Activated CD4-positive, alpha-beta memory T cell treated with anti-CD3 and anti-CD28 coated beads for 36 hours (primary cell): ENCODE measurements at regions of chr1 and their contacts with region 1.

Region 1: GRCh38 chr1:112706908-112707663 is at the start of gene RHOC:
- DNase-seq: peak; percentile 83
- H3K4me3 Mint-ChIP-seq: peak within 1 kb of the TSS; percentile 65
- H3K27ac Mint-ChIP-seq: no peak within 1 kb of the TSS
- H3K4me1 Mint-ChIP-seq: peaks cover 38% of the 10 kb centered on the region
- H3K27me3 Mint-ChIP-seq: peaks cover 3% of the 10 kb centered on the region
- total RNA-seq, gene RHOC: 50.1 to 51.6 TPM

Region 2: DNA sequence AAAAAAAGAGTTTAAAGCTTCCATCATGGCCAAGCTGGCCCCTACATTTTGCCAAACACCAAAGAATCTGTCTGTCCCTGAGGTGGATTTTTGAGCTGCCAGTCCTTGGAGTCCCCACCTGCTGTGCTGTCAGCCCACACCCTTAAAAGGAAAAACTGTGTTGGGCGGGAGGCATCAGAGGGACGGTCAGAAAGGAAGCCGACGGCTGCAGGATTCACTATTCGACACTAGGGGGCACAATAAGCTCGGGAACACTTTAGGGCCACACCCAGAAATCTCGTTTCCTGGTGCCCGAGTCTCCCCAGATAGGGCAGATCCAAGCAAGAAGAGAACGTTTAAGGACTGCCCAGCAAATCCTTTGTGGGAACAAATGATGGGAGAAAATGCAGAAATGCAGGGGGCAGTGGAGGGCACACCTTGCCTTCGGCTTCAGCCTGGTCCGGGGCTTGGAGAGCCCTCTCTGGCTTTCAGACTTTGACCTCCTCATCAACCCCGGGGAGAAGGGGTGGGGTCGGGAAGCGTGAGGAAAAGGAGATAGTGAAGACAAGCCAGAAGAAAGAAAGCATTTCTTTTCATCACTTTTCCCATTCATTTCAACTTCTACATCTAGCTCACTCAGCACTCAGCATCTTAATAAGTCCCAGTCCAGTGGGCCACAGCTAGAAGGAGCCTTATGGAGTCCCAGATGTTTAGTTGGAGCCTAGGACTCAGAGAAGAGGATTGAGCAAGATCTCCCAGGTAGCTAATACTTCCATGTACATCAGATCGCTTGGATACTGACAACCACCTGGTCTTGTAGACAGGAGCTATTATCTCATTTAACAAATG is 316.1 kb before region 1 on chr1:
- CTCF ChIA-PET with region 1: interaction called, 68 read pairs
- POLR2A ChIA-PET with region 1: interaction called, 4 read pairs
- intact Hi-C with region 1: loop called (anchors 1 kb)
- DNase-seq: peak; percentile 89
- H3K4me3 Mint-ChIP-seq: peak overlapping the region; percentile 55
- H3K27ac Mint-ChIP-seq: no peak overlapping the region
- H3K4me1 Mint-ChIP-seq: peaks cover 34% of the 10 kb centered on the region
- H3K27me3 Mint-ChIP-seq: peaks cover 19% of the 10 kb centered on the region

Region 3: GRCh38 chr1:112466078-112466660 is 240.9 kb before region 1 on chr1:
- CTCF ChIA-PET with region 1: interaction called, 5 read pairs
- POLR2A ChIA-PET with region 1: no interaction called
- intact Hi-C with region 1: loop called (anchors 2 kb)
- DNase-seq: peak; percentile 91
- H3K4me3 Mint-ChIP-seq: peak overlapping the region; percentile 74
- H3K27ac Mint-ChIP-seq: no peak overlapping the region
- H3K4me1 Mint-ChIP-seq: peaks cover 8% of the 10 kb centered on the region
- H3K27me3 Mint-ChIP-seq: peaks cover 15% of the 10 kb centered on the region

Region 4: DNA sequence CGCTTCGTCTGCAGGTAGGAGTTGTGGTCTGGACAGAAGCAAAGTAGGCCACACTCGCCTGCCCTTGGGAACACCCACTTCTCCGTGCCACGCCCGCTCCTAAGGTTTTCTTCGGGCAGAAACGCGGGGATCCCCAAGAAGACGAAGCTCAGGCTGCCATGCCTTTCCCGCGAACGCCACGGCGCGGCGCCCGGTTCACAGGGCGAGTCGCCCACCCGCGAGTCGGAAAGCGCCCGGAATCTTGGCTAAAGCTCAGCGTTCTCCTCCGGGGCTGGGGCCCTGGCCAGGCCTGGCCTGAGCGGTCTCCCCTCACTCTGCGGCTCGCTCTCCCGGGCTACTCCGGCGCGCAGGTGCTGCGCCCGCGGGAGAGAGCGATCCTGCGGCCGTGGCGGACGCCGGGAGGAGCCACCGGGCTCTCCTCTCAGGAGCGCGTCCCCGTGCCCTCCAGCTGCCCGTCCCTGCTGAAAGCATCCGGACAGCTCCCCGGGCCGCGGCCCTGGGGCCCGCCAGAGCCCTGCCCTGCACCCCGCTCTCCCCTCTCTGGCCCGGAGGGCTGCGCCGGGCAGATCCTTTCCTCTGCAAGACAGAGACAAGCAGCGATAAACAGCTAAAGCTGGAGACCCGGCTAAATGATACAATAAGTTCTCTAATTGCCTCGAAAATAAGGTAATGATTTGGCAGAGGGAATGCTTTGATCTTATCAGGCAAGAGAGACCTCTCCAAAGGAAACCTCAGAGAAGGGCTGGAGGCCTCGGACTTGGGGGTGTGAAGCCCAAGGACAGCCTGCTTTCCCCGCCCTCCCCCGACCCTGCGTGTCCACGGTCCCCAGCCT is 205.1 kb before region 1 on chr1:
- CTCF ChIA-PET with region 1: interaction called, 43 read pairs
- POLR2A ChIA-PET with region 1: no interaction called
- intact Hi-C with region 1: loop called (anchors 1 kb)
- DNase-seq: peak; percentile 70
- H3K4me3 Mint-ChIP-seq: peak overlapping the region; percentile 10
- H3K27ac Mint-ChIP-seq: no peak overlapping the region
- H3K4me1 Mint-ChIP-seq: peaks cover 6% of the 10 kb centered on the region
- H3K27me3 Mint-ChIP-seq: peaks cover 51% of the 10 kb centered on the region

Region 5: GRCh38 chr1:112666946-112667345 is 40.1 kb before region 1 on chr1:
- CTCF ChIA-PET with region 1: interaction called, 4 read pairs
- POLR2A ChIA-PET with region 1: interaction called, 5 read pairs
- intact Hi-C with region 1: loop called (anchors 2 kb)
- DNase-seq: no peak
- H3K4me3 Mint-ChIP-seq: no peak overlapping the region
- H3K27ac Mint-ChIP-seq: peak overlapping the region; percentile 76
- H3K4me1 Mint-ChIP-seq: peaks cover 37% of the 10 kb centered on the region
- H3K27me3 Mint-ChIP-seq: no peaks in the 10 kb centered on the region

Region 6: DNA sequence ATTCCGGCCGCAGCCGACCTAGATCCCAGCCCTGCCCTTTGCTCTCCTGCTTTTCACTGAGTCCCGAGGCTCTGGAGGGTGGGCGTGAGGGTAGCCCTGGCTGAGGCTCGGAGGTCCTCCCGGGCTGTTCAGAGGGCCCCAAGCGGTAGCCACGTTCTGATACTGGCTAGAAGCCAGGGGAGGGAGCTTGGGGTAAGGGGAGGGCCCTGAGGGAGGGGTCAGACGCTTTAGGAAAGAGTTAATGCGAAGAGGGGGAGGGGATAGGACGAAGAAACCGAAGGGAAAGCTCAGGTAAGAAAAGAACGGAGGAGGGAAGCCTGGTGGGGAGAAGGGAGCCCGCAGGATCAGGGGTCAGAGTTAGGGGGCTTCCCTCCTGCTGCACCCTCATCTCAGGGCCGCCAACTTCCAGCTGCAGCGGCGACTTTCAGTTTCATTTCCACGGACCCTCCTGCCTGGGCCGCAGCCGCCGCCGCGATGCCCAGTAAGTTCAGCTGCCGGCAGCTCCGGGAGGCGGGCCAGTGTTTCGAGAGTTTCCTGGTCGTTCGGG is 32.6 kb before region 1 on chr1 and contains the start of gene MOV10:
- CTCF ChIA-PET with region 1: interaction called, 6 read pairs
- POLR2A ChIA-PET with region 1: interaction called, 9 read pairs
- intact Hi-C with region 1: loop called (anchors 2 kb)
- DNase-seq: peak; percentile 73
- H3K4me3 Mint-ChIP-seq: peak within 1 kb of the TSS; percentile 96
- H3K27ac Mint-ChIP-seq: peak within 1 kb of the TSS; percentile 94
- H3K4me1 Mint-ChIP-seq: peaks cover 46% of the 10 kb centered on the region
- H3K27me3 Mint-ChIP-seq: no peaks in the 10 kb centered on the region
- total RNA-seq, gene MOV10: 57.7 to 63.1 TPM

Region 7: GRCh38 chr1:112694363-112694929 is 12.6 kb before region 1 on chr1:
- CTCF ChIA-PET with region 1: no interaction called
- POLR2A ChIA-PET with region 1: no interaction called
- intact Hi-C with region 1: no loop called
- DNase-seq: no peak
- H3K4me3 Mint-ChIP-seq: no peak overlapping the region
- H3K27ac Mint-ChIP-seq: peak overlapping the region; percentile 3
- H3K4me1 Mint-ChIP-seq: no peaks in the 10 kb centered on the region
- H3K27me3 Mint-ChIP-seq: no peaks in the 10 kb centered on the region

Region 8: DNA sequence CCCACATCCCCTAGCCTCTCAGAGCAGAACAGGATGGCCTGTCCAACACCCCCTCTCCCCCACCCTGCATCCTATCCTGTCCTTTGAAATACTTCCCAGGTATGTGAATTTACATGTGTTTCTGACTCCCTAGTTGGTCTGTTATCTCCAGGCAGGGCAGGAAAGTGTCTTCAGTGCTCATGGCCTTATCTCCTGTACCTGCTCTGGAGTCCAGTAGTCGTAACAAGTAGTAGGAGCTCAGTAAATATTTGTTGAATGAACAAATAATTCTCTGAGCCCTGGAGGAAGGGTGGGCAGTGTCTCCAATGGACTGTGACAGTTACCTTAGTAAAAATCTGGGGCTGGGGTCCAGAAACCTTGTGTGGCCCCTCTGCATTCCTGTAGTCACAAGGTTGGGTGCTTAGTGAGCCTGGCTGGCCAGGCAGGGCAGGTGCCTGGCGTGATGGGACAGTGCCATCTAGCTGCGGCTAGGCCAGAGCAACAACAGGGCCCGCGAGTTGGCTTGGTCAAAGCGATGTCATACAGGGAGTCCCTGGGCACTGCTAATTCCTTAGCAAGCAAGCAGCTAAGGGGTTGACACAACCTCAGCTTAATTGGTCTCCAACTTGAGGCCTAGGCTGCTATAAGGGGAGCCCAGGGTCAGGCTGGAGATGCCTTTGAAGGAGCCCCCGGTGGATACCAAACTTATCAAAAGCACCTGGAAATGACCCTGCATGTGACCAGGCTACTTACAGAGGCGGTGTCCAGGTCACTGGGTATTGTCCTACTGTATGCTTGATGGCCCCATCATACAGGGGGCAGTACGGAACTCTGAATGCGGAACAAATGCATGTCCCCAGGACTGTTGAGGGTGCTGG is 97.0 kb after region 1 on chr1:
- CTCF ChIA-PET with region 1: interaction called, 11 read pairs
- POLR2A ChIA-PET with region 1: no interaction called
- intact Hi-C with region 1: no loop called
- DNase-seq: peak; percentile 77
- H3K4me3 Mint-ChIP-seq: no peak overlapping the region
- H3K27ac Mint-ChIP-seq: no peak overlapping the region
- H3K4me1 Mint-ChIP-seq: peaks cover 2% of the 10 kb centered on the region
- H3K27me3 Mint-ChIP-seq: peaks cover 1% of the 10 kb centered on the region